ENCODE measurements at regions of chr2 and their contacts with region 1.

Region 1: GRCh38 chr2:106523976-106524665 is 37.0 kb downstream of the CD8B2 start:
- DNase-seq: no peak
- H3K4me3 ChIP-seq: no peak overlapping the region
- H3K27ac ChIP-seq: no peak overlapping the region
- H3K4me1 ChIP-seq: no peaks in the 10 kb centered on the region
- H3K27me3 ChIP-seq: no peaks in the 10 kb centered on the region
- CTCF ChIP-seq: no peak
- POLR2A ChIP-seq: no peak

Region 2: DNA sequence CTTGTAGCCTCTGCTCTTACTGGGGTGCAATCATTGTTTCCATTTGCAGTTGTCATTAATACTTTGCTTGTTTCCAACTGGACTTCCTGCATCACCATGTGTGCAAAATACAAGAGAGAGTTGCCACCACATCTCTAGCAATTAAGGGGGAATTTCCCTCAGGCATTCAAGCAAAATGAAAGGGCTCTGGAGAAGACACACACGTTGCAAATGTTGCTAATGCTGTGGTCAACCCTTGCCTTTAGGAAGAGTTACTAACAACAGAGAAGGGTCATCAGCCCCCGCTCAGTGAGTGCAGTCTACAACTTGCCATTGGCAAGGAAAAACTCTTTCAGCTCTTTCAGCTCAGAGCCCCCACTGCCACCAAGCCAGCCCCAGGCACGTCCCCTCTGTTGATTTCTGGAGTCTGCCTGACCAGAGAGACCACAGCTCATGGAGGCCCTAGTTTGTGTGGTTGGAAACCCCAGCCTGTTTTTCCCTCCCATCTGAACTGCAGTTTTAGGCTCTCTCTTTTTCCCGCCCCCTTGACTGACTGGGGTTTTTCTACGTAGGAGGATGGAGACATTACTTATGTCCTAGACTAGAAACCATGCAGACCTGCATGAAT is 1308.4 kb before region 1 on chr2:
- intact Hi-C with region 1: loop called (anchors 5 kb)
- DNase-seq: no peak
- H3K4me3 ChIP-seq: no peak overlapping the region
- H3K27ac ChIP-seq: no peak overlapping the region
- H3K4me1 ChIP-seq: no peaks in the 10 kb centered on the region
- H3K27me3 ChIP-seq: no peaks in the 10 kb centered on the region
- CTCF ChIP-seq: no peak
- POLR2A ChIP-seq: no peak

Region 3: DNA sequence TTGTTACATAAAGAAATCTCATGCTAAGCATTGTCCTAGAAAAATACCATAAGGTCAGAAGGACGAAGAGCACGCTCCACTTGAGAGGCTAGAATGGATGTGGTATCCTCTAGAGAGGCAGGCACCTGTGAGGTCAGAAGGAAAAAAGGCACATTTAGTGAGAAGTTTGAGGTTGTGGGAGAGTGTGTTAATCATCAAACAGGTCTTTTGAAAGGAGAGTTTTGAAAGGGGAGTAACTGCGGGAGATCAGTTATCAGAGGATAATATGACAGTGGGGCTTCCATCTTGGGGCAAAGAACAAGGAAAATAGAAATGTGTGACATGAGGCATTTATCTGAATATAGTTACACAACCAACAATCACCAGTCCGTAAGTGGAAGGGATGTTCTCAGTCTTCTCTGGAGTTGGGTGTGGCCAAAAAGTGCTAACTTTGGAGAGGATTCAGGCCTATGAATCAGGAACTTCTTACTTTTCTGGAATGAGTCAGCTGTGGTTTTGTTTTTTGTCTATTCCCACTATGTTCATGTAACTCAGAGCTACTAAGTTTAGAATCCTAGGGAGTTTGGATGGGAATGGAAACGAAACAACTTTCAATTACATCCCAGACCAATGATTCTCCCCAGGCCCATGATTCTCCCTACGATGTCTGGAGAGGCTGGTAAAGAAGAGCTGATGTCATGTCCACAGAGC is 813.2 kb after region 1 on chr2:
- intact Hi-C with region 1: no loop called
- DNase-seq: no peak
- H3K4me3 ChIP-seq: no peak overlapping the region
- H3K27ac ChIP-seq: no peak overlapping the region
- H3K4me1 ChIP-seq: no peaks in the 10 kb centered on the region
- H3K27me3 ChIP-seq: no peaks in the 10 kb centered on the region
- CTCF ChIP-seq: no peak
- POLR2A ChIP-seq: no peak

Measured in breast epithelium (tissue), 4 donors.